Cardiac septum (tissue), 1 donor: ENCODE measurements at regions of chr9 and their contacts with region 1.

Region 1: DNA sequence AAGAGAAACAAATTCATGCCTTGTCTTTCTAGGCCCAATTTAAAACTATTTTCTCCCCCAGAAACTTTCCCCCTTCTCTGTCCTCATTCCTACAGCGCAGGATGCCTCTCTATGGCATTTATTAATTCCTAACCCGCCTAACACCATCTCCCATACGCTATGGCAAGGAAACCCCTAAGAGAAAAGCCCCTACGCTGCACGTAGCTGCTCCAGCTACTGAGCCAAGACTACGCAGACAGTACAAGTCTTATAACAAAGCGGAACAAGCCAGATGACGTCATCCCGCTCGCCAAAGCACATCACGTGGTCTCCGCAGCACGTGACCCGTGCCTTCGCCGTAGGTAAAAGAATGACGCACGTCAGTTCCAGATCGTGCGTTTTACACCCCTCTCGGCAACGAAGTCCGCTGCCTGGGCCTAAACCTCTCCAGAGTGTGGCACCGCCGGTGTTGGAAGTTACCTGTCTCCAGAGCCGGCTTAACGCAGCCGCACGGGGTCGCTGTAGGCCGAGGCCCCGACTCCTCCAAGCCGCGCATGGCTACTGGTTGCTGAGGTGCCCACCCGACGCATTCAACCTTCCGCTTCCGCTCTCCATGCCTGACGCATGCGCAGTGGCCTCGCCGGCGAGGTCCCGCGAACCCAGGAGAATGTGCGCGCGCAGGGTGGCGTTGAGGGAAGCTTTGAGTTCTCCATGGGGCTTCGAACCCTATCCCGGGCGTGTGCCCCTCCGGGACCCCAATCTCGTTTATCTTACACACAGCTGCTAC is at the start of gene TRMO:
- DNase-seq: peak; percentile 98
- total RNA-seq, gene TRMO: 7.3 TPM

Region 2: DNA sequence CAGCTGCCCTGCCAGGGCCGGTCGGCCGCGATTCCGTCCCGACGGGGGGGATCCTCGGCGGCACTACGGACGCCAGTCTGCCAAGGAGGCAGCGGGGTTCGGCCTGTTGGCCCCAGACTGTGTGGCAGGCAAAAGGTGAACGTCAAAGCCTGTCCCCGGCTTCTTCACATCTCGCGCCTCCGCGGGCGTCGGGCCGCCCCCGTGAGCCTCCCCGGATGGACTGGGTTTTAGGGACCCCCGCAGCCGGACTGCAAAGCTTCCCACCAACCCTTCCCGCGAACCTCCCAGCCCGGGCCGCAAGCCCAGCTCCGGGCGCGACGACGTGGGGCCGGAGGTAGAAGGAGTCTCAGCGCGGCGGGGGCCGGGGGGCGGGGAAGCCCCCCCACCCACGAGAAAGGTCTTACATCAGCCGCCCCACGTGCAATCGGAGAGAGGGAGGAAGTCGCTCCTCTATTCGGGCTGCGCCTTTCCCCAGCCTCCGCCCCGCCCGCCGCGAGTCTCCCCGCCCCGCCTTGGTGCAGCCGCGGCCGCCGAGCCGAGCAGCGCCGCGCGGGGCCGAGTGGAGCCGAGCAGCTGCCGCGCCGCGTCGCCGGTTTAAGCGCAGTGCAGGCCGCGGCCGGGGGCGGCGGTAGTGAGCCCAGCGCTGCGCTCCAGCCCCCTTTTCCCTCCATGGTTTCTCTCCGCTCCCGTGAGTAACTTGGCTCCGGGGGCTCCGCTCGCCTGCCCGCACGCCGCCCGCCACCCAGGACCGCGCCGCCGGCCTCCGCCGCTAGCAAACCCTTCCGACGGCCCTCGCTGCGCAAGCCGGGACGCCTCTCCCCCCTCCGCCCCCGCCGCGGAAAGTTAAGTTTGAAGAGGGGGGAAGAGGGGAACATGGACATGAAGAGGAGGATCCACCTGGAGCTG is 60.8 kb after region 1 on chr9 and contains the start of gene ANP32B:
- intact Hi-C with region 1: loop called (anchors 2 kb)
- DNase-seq: peak; percentile 96
- total RNA-seq, gene ANP32B: 69.0 TPM

Region 3: GRCh38 chr9:98034593-98035546 is 112.7 kb after region 1 on chr9:
- intact Hi-C with region 1: loop called (anchors 2 kb)
- DNase-seq: peak; percentile 87

Region 4: GRCh38 chr9:98056269-98057137 is 134.4 kb after region 1 on chr9 and contains the start of gene NANS:
- intact Hi-C with region 1: loop called (anchors 1 kb)
- DNase-seq: peak; percentile 97
- total RNA-seq, gene NANS: 26.3 TPM

Region 5: DNA sequence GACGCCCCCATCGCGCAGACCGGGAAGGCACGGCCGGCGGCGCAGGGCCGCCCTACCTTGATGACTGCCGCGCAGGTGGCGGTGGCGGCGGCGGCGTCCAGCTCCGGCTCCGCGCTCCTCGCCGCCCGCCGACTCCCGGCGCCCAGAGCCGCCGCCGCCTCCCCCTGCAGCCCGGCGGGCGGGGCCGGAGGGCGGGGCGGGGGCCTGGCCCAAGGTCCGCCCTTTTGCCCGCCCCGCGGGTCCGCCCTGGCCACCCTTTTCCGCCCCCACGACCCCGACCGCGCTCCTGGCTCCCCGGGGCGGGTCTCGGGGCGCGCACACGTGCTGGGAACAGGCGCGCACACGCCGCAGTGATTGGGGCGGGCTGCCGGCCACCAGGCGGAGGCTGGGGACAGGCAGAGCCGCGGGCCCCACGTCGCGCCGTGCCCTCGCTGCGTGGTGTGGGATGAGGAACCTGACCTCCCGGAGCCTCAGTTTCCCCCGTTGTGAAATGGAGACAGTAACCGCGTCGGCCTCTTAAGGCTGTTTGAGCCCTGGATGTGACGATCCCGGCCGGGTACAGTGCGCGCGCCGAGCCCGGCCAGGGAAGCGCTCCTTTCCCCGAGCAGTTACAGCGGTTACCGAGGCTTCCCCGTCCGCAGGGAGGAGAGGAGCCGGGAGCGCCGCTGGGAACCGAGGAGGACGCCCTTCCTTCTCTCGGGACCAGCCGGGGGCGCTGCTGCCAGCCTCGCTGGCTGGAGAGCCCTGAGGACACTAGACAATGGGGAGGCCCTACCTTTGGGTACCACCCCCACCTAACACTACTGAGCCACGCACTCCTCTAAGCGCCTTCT is 270.6 kb after region 1 on chr9 and contains the start of gene CORO2A:
- intact Hi-C with region 1: loop called (anchors 5 kb)
- DNase-seq: peak; percentile 79
- total RNA-seq, gene CORO2A: 0.19 TPM

Region 6: DNA sequence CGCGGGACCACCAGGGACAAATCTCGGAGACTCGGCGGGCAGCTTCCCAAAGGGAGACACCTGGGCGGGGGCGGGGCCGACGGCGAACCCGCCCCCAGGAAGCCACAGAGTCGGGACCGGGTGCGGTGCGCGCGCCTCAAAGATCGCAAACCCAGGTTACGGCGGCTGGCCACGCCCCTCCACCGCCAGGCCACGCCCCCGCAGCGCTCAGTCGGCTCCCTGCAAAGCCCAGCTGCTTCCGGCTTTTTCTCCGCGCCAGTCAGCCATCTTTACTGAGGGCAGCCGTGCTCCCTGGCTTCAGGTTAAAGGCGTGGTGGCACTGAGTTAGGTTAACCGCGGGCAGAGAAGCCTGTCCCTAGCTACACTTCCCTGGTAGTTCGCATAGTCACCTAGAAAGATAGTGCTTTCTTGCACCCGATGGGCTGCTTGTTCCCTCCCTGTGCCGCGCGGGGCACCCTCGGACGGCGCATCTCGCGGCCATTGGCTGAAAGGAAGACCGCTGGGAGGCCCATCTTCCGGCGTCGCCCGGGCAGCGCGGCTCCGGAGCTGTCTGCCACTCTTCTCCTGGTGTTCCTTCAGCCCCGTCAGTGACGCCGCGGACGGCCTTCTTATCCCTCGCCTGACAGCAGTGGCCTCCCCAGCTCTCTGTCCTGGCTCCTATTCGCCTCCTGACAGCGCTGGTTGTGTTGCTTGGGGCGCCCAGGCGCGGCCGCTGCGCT is 333.6 kb after region 1 on chr9 and contains the start of gene TBC1D2:
- intact Hi-C with region 1: loop called (anchors 2 kb)
- DNase-seq: peak; percentile 99
- total RNA-seq, gene TBC1D2: 2.0 TPM